Activated T-helper 1 cell treated with anti-CD3 and anti-CD28 coated beads, Interleukin-12 subunit alpha, Interleukin-12 subunit beta, Interleukin-2, Interleukin-4 antibody, amounts not matched to agents 30 ng/mL and 10 ng/mL and 1 ng/mL, durations not matched to agents 14 hours and 24 hours and 36 hours (primary cell): ENCODE measurements at regions of chr2 and their contacts with region 1.

Region 1: GRCh38 chr2:9423100-9423921 is at the starts of genes CPSF3 and ITGB1BP1:
- DNase-seq: peak; percentile 96
- H3K4me3 Mint-ChIP-seq: peak within 1 kb of the TSS; percentile 92
- H3K27ac Mint-ChIP-seq: peak within 1 kb of the TSS; percentile 92
- H3K4me1 Mint-ChIP-seq: peaks cover 39% of the 10 kb centered on the region
- H3K27me3 Mint-ChIP-seq: no peaks in the 10 kb centered on the region
- total RNA-seq, gene CPSF3: 74.3 and 74.7 TPM in 2 replicates
- total RNA-seq, gene ITGB1BP1: 115 and 119 TPM in 2 replicates

Region 2: GRCh38 chr2:9142551-9143263 is 280.6 kb before region 1 on chr2:
- intact Hi-C with region 1: loop called (anchors 5 kb)
- DNase-seq: peak; percentile 70
- H3K4me3 Mint-ChIP-seq: no peak overlapping the region
- H3K27ac Mint-ChIP-seq: no peak overlapping the region
- H3K4me1 Mint-ChIP-seq: peaks cover 6% of the 10 kb centered on the region
- H3K27me3 Mint-ChIP-seq: peaks cover 16% of the 10 kb centered on the region

Region 3: GRCh38 chr2:9555297-9556141 is 132.2 kb after region 1 on chr2 and contains the start of gene ADAM17:
- intact Hi-C with region 1: loop called (anchors 1 kb)
- DNase-seq: peak; percentile 89
- H3K4me3 Mint-ChIP-seq: peak within 1 kb of the TSS; percentile 99
- H3K27ac Mint-ChIP-seq: peak within 1 kb of the TSS; percentile 98
- H3K4me1 Mint-ChIP-seq: peaks cover 59% of the 10 kb centered on the region
- H3K27me3 Mint-ChIP-seq: no peaks in the 10 kb centered on the region
- total RNA-seq, gene ADAM17: 30.4 and 31.6 TPM in 2 replicates

Region 4: DNA sequence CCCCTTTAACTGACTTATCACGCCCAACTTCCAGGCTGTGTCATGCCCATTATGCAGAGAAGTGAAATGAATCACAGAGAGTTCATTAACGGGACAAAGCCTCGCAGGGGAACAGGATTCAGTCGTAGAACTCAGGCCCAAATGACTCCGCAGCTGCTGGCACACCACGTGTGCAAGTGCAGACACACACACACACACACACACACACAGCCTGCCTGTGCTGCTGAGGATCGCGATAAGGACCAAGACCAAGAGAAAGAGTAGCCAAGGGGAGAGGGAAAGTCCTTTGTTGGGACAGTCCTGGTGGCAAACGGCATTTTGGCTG is 329.9 kb after region 1 on chr2:
- intact Hi-C with region 1: loop called (anchors 1 kb)
- DNase-seq: peak; percentile 45
- H3K4me3 Mint-ChIP-seq: peak overlapping the region; percentile 77
- H3K27ac Mint-ChIP-seq: peak overlapping the region; percentile 96
- H3K4me1 Mint-ChIP-seq: peaks cover 70% of the 10 kb centered on the region
- H3K27me3 Mint-ChIP-seq: peaks cover 34% of the 10 kb centered on the region

Region 5: DNA sequence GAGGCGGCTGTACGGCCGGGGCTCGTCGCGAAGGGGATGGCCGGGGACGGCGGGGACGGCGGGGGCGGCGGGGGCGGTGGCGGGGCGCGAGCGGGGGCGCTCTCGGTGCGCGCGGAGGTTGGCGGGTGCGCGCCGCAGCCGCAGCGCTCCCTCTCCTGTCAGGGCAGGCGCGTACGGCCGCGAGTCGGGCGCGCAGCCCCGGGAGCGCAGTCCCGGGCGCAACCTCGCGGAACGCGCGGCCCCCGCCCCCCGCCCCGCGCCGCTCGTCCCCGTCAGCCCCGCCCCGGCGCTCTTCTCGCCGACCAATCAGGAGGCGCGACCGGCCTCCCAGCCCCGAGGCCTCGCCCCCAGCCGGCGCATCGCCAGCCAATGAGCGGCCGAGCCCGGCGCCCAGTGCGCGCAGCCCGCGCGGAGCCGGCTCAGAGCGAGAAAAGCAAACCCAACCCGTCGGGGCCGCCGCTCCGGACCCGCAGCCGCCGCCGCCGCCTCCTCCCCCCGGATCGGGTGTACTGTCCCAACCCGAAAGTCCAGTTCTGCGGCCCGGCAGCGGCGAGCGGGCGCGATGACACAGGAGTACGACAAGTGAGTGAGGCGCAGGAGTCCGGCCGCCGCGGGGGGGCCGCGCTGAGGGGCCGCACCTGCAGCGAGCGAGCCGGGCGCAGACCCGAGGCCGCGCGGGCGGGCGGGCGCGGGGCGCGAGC is 528.1 kb after region 1 on chr2 and contains the start of gene GRHL1:
- intact Hi-C with region 1: loop called (anchors 1 kb)
- DNase-seq: peak; percentile 92
- H3K4me3 Mint-ChIP-seq: peak within 1 kb of the TSS; percentile 85
- H3K27ac Mint-ChIP-seq: peak within 1 kb of the TSS; percentile 82
- H3K4me1 Mint-ChIP-seq: peaks cover 24% of the 10 kb centered on the region
- H3K27me3 Mint-ChIP-seq: peaks cover 54% of the 10 kb centered on the region
- total RNA-seq, gene GRHL1: 1.4 and 1.5 TPM in 2 replicates

Region 6: GRCh38 chr2:10302479-10303180 is 879.3 kb after region 1 on chr2 and contains the start of gene HPCAL1:
- intact Hi-C with region 1: loop called (anchors 1 kb)
- DNase-seq: peak; percentile 80
- H3K4me3 Mint-ChIP-seq: peak within 1 kb of the TSS; percentile 99
- H3K27ac Mint-ChIP-seq: peak within 1 kb of the TSS; percentile 90
- H3K4me1 Mint-ChIP-seq: peaks cover 73% of the 10 kb centered on the region
- H3K27me3 Mint-ChIP-seq: peaks cover 4% of the 10 kb centered on the region
- total RNA-seq, gene HPCAL1: 59.6 and 62.4 TPM in 2 replicates

Region 7: GRCh38 chr2:11154923-11155380 is 1731.6 kb after region 1 on chr2:
- intact Hi-C with region 1: loop called (anchors 2 kb)
- DNase-seq: peak; percentile 94
- H3K4me3 Mint-ChIP-seq: peak overlapping the region; percentile 85
- H3K27ac Mint-ChIP-seq: peak overlapping the region; percentile 83
- H3K4me1 Mint-ChIP-seq: peaks cover 12% of the 10 kb centered on the region
- H3K27me3 Mint-ChIP-seq: peaks cover 7% of the 10 kb centered on the region